Posterior cingulate gyrus (tissue), 11 donors: ENCODE measurements at regions of chr16 and their contacts with region 1.

Region 1: DNA sequence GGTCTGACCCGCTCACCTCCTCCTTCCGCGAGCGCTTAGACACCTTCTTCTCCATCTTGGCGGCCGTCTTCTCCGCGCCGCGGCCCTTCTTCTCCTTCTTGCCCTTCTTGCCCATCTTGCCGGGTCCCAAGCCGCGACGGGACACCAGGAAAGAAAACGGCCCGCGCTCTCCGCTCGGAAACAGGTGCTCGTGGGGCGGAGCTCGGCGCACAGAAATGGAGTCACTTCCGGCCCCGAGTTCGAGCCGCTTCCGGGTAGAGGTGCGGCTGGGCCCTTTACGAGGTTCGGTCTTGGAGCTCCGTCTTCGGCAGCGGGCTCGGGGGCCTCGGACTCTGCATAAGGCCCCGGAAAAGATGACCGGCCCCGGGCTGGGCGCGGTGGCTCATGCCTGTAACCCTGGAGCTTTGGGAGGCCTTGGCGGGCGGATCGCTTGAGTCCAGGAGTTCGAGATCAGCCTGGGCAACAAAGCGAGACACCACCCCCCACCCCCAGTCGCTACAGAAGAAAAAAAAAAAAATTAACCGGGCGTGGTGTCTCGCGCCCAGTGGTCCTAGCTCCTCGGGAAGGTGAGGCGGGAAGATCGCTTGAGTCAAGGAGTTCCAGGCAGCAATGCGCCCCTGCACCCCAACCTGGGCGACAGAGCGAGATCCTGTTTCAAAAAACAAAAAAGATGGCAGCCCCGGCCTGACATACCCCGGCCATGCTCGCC is at the start of gene KLHDC4:
- DNase-seq: peak; percentile 86 to 98 (median 92)

Region 2: GRCh38 chr16:87586201-87586782 is 179.6 kb before region 1 on chr16:
- intact Hi-C with region 1: loop called (anchors 1 kb)
- DNase-seq: peak in 1 of 10 donors; percentile 40

Region 3: GRCh38 chr16:87636072-87636684 is 129.8 kb before region 1 on chr16:
- intact Hi-C with region 1: loop called (anchors 2 kb)
- DNase-seq: peak; percentile 56 to 96 (median 81)

Region 4: GRCh38 chr16:87705771-87706275 is 60.1 kb before region 1 on chr16:
- intact Hi-C with region 1: loop called (anchors 1 kb)
- DNase-seq: no peak

Region 5: GRCh38 chr16:87853411-87854052 is 87.6 kb after region 1 on chr16:
- intact Hi-C with region 1: no loop called
- DNase-seq: peak; percentile 74 to 99 (median 88)

Region 6: DNA sequence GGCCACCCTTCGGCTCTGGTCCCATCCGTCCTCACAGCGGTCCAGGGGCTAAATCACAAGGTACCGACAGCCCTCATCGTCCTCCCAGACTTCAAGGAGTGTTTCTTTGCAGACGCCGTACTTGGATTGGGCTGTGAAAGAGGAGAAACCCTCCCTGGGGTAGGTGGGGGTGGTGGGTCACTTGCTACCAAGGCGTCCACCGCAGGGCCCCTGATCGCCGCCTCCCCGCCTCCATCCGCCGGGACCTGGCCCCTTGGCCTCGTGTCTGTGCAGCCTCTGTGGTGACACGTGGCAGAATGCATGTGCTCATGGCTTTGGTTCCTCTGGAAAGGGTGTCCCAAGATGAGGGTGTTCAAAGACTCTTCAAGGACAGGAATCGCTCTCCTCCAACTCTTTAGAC is 336.7 kb after region 1 on chr16:
- intact Hi-C with region 1: no loop called
- DNase-seq: peak in 2 of 10 donors; percentile 40 to 59